ENCODE measurements at regions of chr17 and their contacts with region 1.

Region 1: DNA sequence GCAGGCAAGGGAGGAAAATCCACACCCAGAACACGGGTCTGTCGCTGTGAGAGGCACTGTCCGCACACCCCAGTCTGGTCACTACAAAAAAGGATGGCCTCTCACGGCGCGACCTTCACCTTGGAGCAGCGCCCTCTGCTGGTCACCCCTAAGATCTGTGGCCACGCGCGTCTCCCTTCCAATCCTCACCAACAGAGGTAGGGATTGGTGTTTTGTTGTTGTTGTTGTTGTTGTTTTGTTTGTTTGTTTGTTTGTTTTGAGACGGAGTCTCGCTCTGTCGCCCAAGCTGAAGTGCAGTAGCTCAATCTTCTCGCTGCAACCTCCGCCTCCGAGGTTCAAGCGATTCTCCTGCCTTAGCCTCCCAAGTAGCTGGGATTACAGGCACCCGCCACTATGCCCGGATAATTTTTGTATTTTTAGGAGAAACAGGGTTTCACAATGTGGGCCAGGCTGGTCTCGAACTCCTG is 15.0 kb upstream of the C17orf58 start:
- DNase-seq: peak in 7 of 9 donors; percentile 28 to 72 (median 44)
- ATAC-seq: peak; percentile 94
- H3K4me3 ChIP-seq: peak overlapping the region; percentile 37
- H3K4me3 Mint-ChIP-seq: peak overlapping the region in 8 of 10 donors; percentile 6 to 74 (median 44)
- H3K27ac ChIP-seq: no peak overlapping the region
- H3K27ac Mint-ChIP-seq: peak overlapping the region in 1 of 9 donors; percentile 30
- H3K4me1 ChIP-seq: peaks cover 0 to 4% of the 10 kb centered on the region in 2 donors
- H3K4me1 Mint-ChIP-seq: peaks cover 2 to 8% (median 5%) of the 10 kb centered on the region in 7 donors
- H3K27me3 ChIP-seq: no peaks in the 10 kb centered on the region
- H3K27me3 Mint-ChIP-seq: peaks cover 0 to 22% (median 0%) of the 10 kb centered on the region in 5 donors

Region 2: GRCh38 chr17:67959288-67959900 is 51.8 kb before region 1 on chr17:
- CTCF ChIA-PET with region 1: no interaction called
- POLR2A ChIA-PET with region 1: no interaction called
- intact Hi-C with region 1: loop called (anchors 1 to 2 kb)
- DNase-seq: no peak
- ATAC-seq: no peak
- H3K4me3 ChIP-seq: no peak overlapping the region
- H3K4me3 Mint-ChIP-seq: no peak overlapping the region
- H3K27ac ChIP-seq: no peak overlapping the region
- H3K27ac Mint-ChIP-seq: peak overlapping the region in 8 of 9 donors; percentile 8 to 79 (median 54)
- H3K4me1 ChIP-seq: no peaks in the 10 kb centered on the region
- H3K4me1 Mint-ChIP-seq: peaks cover 0 to 6% (median 5%) of the 10 kb centered on the region in 7 donors
- H3K27me3 ChIP-seq: no peaks in the 10 kb centered on the region
- H3K27me3 Mint-ChIP-seq: no peaks in the 10 kb centered on the region

Measured in naive thymus-derived CD4-positive, alpha-beta T cell (primary cell).